ENCODE measurements at regions of chr13 and their contacts with region 1.

Region 1: DNA sequence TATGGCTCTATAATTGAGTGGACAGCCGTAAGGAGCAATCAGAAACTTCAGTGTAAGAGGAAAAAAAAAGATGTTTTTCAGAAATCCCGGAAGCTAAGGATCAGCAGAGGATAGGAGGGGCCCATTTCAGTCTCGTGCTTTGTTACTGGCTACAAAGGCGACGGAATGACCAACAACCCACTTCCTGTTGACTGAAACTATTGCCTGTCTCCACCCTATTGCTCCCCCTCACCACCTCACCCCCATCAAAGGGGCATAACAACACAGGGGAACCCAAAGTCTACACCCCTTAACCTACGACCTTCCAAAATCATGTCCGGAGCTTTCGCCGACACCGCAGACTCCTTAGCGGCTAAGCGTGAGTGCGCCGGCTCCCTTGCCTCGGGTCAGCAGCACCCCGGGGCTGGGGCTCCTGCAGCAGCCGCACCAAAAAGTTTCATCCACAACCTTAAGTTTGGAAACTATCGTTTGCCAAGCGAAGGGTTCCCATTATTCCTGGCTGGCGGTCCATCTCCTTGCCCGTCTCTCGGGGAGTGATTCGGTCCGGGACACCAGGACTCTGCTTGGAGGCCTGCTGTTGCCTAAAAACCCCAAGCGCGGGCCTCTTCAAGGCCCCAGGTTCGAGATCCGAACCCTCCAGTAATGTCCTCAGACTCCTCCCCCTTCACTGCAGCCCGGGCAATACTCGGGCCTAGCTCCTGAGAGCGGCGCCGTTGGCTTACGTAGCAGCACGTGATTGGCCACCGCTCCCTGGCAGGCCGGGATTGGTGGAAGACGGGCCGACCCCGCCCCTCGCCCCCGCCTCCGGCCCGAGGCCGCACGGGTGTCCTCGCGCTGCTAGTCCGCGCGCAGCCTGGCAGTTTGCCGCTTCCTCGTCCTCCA is at the start of gene TPP2:
- DNase-seq: peak; percentile 98
- H3K4me3 Mint-ChIP-seq: peak within 1 kb of the TSS; percentile 95
- H3K27ac Mint-ChIP-seq: peak within 1 kb of the TSS; percentile 97
- H3K4me1 Mint-ChIP-seq: peaks cover 72% of the 10 kb centered on the region
- H3K27me3 Mint-ChIP-seq: no peaks in the 10 kb centered on the region
- total RNA-seq, gene TPP2: 77.0 and 78.9 TPM in 2 replicates

Region 2: GRCh38 chr13:102609696-102610095 is 13.3 kb after region 1 on chr13:
- intact Hi-C with region 1: loop called (anchors 1 kb)
- DNase-seq: no peak
- H3K4me3 Mint-ChIP-seq: peak overlapping the region; percentile 35
- H3K27ac Mint-ChIP-seq: peak overlapping the region; percentile 83
- H3K4me1 Mint-ChIP-seq: peaks cover 42% of the 10 kb centered on the region
- H3K27me3 Mint-ChIP-seq: no peaks in the 10 kb centered on the region

Region 3: GRCh38 chr13:102651892-102652291 is 55.5 kb after region 1 on chr13:
- intact Hi-C with region 1: loop called (anchors 2 kb)
- DNase-seq: no peak
- H3K4me3 Mint-ChIP-seq: no peak overlapping the region
- H3K27ac Mint-ChIP-seq: no peak overlapping the region
- H3K4me1 Mint-ChIP-seq: peaks cover 13% of the 10 kb centered on the region
- H3K27me3 Mint-ChIP-seq: no peaks in the 10 kb centered on the region

Region 4: DNA sequence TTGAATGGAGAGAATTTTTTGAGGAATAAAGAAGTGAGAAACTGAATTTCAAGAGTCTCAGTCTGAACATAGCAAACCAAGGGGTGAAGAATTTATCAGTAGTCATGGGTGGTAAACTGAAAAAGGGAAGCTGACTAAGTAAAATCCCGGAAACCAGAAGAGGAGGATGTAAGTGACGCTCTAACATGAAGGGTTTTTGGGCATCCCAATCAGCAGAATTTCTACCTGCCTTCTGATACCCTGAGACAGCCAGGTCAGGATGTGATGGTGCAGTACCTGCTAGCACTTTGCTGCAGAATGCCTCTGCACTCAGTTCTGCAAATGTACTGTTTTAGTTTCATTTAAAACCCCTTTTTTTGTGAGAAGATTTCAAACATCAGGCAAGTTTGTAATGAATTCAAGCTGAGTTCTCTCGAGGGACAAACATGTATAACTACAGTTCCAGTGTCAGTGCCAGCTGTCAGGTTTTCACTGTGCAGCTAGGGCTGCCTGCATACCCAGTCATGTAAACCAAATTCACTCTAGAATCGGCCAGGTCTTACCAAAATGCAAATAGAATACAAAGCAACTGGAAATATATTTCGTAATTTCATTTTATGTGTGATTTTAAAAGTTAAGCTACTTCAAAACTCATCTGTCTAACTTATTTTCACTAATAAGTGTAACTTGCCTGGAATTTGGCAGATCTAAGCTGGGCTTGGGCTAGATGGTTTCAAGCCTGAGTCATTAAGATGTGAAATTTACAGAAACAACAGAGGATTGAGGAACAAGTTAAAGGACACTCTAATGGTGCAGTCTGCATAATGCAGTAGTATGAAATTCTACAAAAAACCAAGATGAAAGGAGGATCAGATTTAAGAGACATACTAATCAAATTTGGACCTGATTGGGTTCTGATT is 84.7 kb after region 1 on chr13:
- intact Hi-C with region 1: loop called (anchors 2 kb)
- DNase-seq: no peak
- H3K4me3 Mint-ChIP-seq: peak overlapping the region; percentile 35
- H3K27ac Mint-ChIP-seq: peak overlapping the region; percentile 54
- H3K4me1 Mint-ChIP-seq: peaks cover 41% of the 10 kb centered on the region
- H3K27me3 Mint-ChIP-seq: no peaks in the 10 kb centered on the region

Region 5: GRCh38 chr13:102773441-102774215 is 177.2 kb after region 1 on chr13 and contains the start of gene TEX30:
- intact Hi-C with region 1: loop called (anchors 1 kb)
- DNase-seq: peak; percentile 89
- H3K4me3 Mint-ChIP-seq: peak within 1 kb of the TSS; percentile 95
- H3K27ac Mint-ChIP-seq: peak within 1 kb of the TSS; percentile 95
- H3K4me1 Mint-ChIP-seq: peaks cover 66% of the 10 kb centered on the region
- H3K27me3 Mint-ChIP-seq: no peaks in the 10 kb centered on the region
- total RNA-seq, gene TEX30: 60.2 and 66.0 TPM in 2 replicates

Region 6: GRCh38 chr13:102779436-102780159 is 183.2 kb after region 1 on chr13:
- intact Hi-C with region 1: loop called (anchors 1 kb)
- DNase-seq: peak; percentile 37
- H3K4me3 Mint-ChIP-seq: peak overlapping the region; percentile 57
- H3K27ac Mint-ChIP-seq: peak overlapping the region; percentile 94
- H3K4me1 Mint-ChIP-seq: peaks cover 50% of the 10 kb centered on the region
- H3K27me3 Mint-ChIP-seq: no peaks in the 10 kb centered on the region

Measured in activated T-helper 1 cell treated with anti-CD3 and anti-CD28 coated beads, Interleukin-12 subunit alpha, Interleukin-12 subunit beta, Interleukin-2, Interleukin-4 antibody, amounts not matched to agents 30 ng/mL and 10 ng/mL and 1 ng/mL, durations not matched to agents 14 hours and 24 hours and 36 hours (primary cell).